ENCODE measurements at regions of chr12 and their contacts with region 1.

Region 1: GRCh38 chr12:50504798-50505385 is at the start of gene DIP2B:
- DNase-seq: peak; percentile 87 to 98 (median 95)
- ATAC-seq: peak; percentile 88 to 93 (median 89)
- H3K4me3 ChIP-seq: peak within 1 kb of the TSS; percentile 71 to 93
- H3K4me3 Mint-ChIP-seq: peak within 1 kb of the TSS; percentile 95 to 97 (median 96)
- H3K27ac ChIP-seq: peak within 1 kb of the TSS; percentile 69
- H3K27ac Mint-ChIP-seq: peak within 1 kb of the TSS; percentile 90 to 91
- H3K4me1 ChIP-seq: peaks cover 37 to 42% of the 10 kb centered on the region in 2 experiments
- H3K4me1 Mint-ChIP-seq: peaks cover 49 to 51% (median 49%) of the 10 kb centered on the region in 3 donors
- H3K27me3 ChIP-seq: no peaks in the 10 kb centered on the region
- H3K27me3 Mint-ChIP-seq: no peaks in the 10 kb centered on the region
- total RNA-seq, gene DIP2B: 27.5 to 46.0 (median 29.6) TPM

Region 2: GRCh38 chr12:50520416-50521207 is 15.7 kb after region 1 on chr12:
- CTCF ChIA-PET with region 1: interaction called, 4 to 10 read pairs
- POLR2A ChIA-PET with region 1: interaction called in 1 of 2 experiments, 5 read pairs
- DNase-seq: no peak
- ATAC-seq: peak; percentile 55 to 71 (median 58)
- H3K4me3 ChIP-seq: no peak overlapping the region
- H3K4me3 Mint-ChIP-seq: peak overlapping the region in 2 of 3 donors; percentile 49 to 70
- H3K27ac ChIP-seq: peak overlapping the region; percentile 65
- H3K27ac Mint-ChIP-seq: peak overlapping the region in 1 of 2 donors; percentile 87
- H3K4me1 ChIP-seq: peaks cover 37 to 59% of the 10 kb centered on the region in 2 experiments
- H3K4me1 Mint-ChIP-seq: peaks cover 49 to 62% (median 61%) of the 10 kb centered on the region in 3 donors
- H3K27me3 ChIP-seq: no peaks in the 10 kb centered on the region
- H3K27me3 Mint-ChIP-seq: no peaks in the 10 kb centered on the region

Region 3: DNA sequence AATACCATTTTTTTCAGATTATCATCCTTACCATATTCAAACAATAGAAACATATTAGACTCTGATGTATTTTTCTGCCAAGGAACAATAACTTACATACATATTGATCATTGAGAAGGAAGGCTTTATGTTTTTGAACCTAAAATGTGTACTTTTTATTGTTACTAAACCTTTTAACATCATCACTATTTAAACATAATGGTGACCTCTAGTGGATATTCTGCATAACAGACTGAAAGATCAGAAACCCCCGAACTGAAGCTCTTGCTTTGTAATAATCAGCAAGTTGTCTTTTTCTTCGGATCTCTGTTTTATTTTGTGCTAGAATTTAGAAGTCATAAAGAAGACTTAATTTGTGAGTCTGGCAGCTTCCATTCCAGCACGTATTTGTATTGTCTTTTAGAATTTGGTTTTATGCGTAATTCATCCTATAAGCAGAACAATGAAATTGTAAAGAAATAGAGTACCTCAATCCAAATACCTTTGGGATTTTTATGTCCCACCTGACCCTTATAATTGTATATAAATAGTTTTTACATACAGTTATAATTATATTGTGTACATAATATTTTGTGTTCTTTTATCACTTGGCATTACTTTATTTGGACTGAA is 133.1 kb after region 1 on chr12:
- CTCF ChIA-PET with region 1: interaction called, 13 to 44 read pairs
- POLR2A ChIA-PET with region 1: interaction called, 3 to 4 read pairs
- DNase-seq: peak in 1 of 35 experiments; percentile 61
- ATAC-seq: peak; percentile 52 to 68 (median 63)
- H3K4me3 ChIP-seq: no peak overlapping the region
- H3K4me3 Mint-ChIP-seq: no peak overlapping the region
- H3K27ac ChIP-seq: no peak overlapping the region
- H3K27ac Mint-ChIP-seq: peak overlapping the region; percentile 70 to 80
- H3K4me1 ChIP-seq: peaks cover 5 to 7% of the 10 kb centered on the region in 2 experiments
- H3K4me1 Mint-ChIP-seq: peaks cover 32 to 54% (median 47%) of the 10 kb centered on the region in 3 donors
- H3K27me3 ChIP-seq: no peaks in the 10 kb centered on the region
- H3K27me3 Mint-ChIP-seq: no peaks in the 10 kb centered on the region

Measured in T-cell (primary cell).